Gastrocnemius medialis (tissue), 4 donors: ENCODE measurements at regions of chr15 and their contacts with region 1.

Region 1: DNA sequence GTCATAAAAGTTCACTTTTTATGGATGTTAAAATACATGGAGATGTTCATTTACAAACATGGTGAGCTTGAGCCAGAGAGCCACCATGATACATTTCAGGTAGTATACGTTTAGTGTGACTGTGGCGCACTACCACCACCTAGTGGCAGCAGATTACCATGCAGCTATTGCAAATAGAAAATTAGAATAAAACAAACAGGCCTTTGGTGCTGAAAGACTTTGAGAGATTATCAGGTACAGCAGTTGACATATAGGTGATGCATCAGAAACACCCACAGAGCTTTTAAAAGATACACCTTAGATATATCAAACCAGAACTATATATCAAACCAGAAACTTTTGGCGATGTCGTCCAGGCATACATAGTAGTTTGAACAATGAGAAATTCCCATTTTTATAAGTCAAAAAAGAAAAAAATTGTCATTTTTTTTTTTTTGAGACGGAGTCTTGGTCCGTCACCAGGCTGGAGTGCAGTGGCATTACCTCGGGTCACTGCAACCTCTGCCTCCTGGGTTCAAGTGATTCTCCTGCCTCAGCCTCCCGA is 42.0 kb upstream of the ICE2 start:
- DNase-seq: peak; percentile 42 to 59
- ATAC-seq: peak; percentile 30 to 73
- H3K4me3 ChIP-seq: no peak overlapping the region
- H3K27ac ChIP-seq: peak overlapping the region; percentile 56 to 77 (median 68)
- H3K4me1 ChIP-seq: peaks cover 23 to 28% of the 10 kb centered on the region in 2 donors
- H3K27me3 ChIP-seq: no peaks in the 10 kb centered on the region
- CTCF ChIP-seq: peak; percentile 79 to 91 (median 84)
- POLR2A ChIP-seq: no peak

Region 2: GRCh38 chr15:60428935-60429334 is 92.0 kb before region 1 on chr15:
- in situ Hi-C with region 1: no loop called
- intact Hi-C with region 1: no loop called
- DNase-seq: no peak
- ATAC-seq: peak; percentile 74 to 87
- H3K4me3 ChIP-seq: no peak overlapping the region
- H3K27ac ChIP-seq: peak overlapping the region in 2 of 4 donors; percentile 26 to 37
- H3K4me1 ChIP-seq: peaks cover 8 to 22% of the 10 kb centered on the region in 2 donors
- H3K27me3 ChIP-seq: no peaks in the 10 kb centered on the region
- CTCF ChIP-seq: no peak
- POLR2A ChIP-seq: no peak

Region 3: DNA sequence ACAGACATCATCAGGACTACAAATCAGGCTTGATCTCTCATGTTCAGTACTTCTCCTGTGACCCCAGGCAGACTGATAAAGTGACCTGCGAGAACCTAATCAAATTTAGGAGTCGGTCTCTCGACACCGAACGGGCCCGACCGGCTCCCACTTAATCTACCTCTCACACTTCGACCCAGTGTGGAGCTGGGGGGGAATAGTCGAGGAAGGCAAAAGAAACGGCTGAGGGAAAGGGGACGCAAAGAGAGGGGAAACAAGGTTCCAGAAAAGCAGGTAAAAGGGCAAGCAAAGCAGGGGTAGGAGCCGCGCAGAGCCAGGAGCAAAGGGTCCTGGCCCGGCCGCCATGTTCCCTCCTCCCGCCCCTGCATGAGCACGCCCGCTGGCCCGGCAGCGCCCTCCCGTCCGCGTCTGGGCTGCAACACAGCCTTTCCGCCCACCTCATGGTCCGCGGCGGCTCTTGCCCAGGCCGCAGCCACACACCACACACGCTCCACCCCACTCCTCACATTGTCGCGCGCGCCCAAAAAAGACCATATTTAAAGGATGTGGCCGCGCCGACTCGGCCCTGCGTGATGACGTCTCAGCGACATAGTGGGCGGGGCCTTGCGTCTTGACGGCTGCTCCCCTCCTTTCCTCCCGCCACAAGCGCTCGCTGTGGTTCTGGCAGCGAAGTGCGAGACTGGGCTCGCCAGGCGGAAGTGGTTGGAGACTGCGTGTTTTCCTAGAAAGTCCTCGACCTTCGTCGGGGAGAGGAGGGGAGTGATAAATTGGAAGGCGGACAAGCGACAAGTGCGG is 42.1 kb before region 1 on chr15 and contains the start of gene ICE2:
- in situ Hi-C with region 1: no loop called
- intact Hi-C with region 1: loop called (anchors 5 kb)
- DNase-seq: peak; percentile 89 to 93
- ATAC-seq: peak; percentile 85 to 91
- H3K4me3 ChIP-seq: peak within 1 kb of the TSS; percentile 91 to 97 (median 93)
- H3K27ac ChIP-seq: peak within 1 kb of the TSS; percentile 89 to 99 (median 96)
- H3K4me1 ChIP-seq: peaks cover 26 to 40% of the 10 kb centered on the region in 2 donors
- H3K27me3 ChIP-seq: no peaks in the 10 kb centered on the region
- CTCF ChIP-seq: no peak
- POLR2A ChIP-seq: peak; percentile 84 to 94
- total RNA-seq, gene ICE2: 5.8 to 19.0 (median 14.3) TPM

Region 4: DNA sequence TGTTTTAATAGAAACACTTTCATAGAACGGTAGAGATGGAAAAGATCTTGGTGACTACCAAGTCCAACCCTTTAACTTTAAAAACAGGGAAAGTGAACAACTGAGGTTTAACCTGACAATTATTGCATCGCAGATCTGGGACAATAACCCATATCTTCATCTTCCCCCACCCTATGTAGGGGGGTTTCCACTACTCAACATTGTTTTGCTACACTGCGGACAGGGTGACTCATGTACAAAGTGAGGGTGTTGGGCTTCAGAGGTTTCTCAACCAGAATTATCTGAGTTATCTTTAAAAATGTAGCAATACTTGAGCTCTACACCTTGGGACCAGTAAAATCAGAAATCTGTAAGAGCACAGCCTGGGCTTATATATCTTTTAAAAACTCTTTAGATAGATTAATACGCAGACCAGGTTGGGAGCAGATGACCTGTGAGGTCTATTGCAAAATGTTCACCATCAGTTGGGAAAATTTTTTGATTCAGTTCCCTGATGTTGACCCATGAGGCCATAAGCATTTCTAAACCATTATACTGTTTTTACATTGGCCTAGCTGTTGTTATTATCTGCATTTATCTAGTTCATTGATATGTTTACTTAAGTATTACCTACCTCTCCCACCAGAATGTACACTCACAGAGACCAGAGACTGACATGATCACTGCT is 61.6 kb after region 1 on chr15:
- in situ Hi-C with region 1: no loop called
- intact Hi-C with region 1: no loop called
- DNase-seq: no peak
- ATAC-seq: peak; percentile 18 to 51
- H3K4me3 ChIP-seq: no peak overlapping the region
- H3K27ac ChIP-seq: peak overlapping the region in 3 of 4 donors; percentile 12 to 26 (median 13)
- H3K4me1 ChIP-seq: peaks cover 71 to 81% of the 10 kb centered on the region in 2 donors
- H3K27me3 ChIP-seq: no peaks in the 10 kb centered on the region
- CTCF ChIP-seq: no peak
- POLR2A ChIP-seq: no peak

Region 5: GRCh38 chr15:60592371-60593169 is 71.7 kb after region 1 on chr15:
- in situ Hi-C with region 1: no loop called
- intact Hi-C with region 1: no loop called
- DNase-seq: peak; percentile 89 to 91
- ATAC-seq: peak; percentile 83 to 84
- H3K4me3 ChIP-seq: peak overlapping the region; percentile 75 to 83 (median 76)
- H3K27ac ChIP-seq: peak overlapping the region; percentile 86 to 98 (median 97)
- H3K4me1 ChIP-seq: peaks cover 32 to 44% of the 10 kb centered on the region in 2 donors
- H3K27me3 ChIP-seq: no peaks in the 10 kb centered on the region
- CTCF ChIP-seq: peak in 4 of 5 experiments; percentile 16 to 17 (median 16)
- POLR2A ChIP-seq: peak; percentile 90 to 95

Region 6: DNA sequence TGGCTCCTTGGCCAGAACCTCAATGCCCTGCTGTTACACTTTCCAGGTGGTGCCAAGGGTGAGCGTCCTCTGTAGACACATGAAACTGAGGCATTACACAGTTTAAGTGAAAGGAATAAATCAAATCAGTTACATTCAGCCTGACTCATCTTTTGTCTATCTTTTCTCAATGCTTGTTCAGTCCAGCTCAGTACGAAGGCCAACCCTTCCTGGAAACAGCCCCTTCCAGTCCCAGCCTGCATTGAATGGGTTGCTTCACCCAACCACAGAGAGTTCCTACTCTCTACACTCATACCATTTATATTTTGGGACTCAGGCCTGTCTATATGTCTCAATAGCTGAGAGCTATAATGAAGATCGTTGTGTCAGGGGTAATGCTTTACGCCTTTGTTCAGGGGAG is 344.6 kb after region 1 on chr15:
- in situ Hi-C with region 1: no loop called
- intact Hi-C with region 1: no loop called
- DNase-seq: no peak
- ATAC-seq: no peak
- H3K4me3 ChIP-seq: no peak overlapping the region
- H3K27ac ChIP-seq: no peak overlapping the region
- H3K4me1 ChIP-seq: no peaks in the 10 kb centered on the region
- H3K27me3 ChIP-seq: no peaks in the 10 kb centered on the region
- CTCF ChIP-seq: no peak
- POLR2A ChIP-seq: no peak